CD8-positive, alpha-beta T cell (primary cell): ENCODE measurements at regions of chr2 and their contacts with region 1.

Region 1: GRCh38 chr2:192162392-192163042 is 32.2 kb downstream of the TMEFF2 start:
- DNase-seq: peak; percentile 23 to 74 (median 64)
- ATAC-seq: peak; percentile 49
- H3K4me3 ChIP-seq: no peak overlapping the region
- H3K4me3 Mint-ChIP-seq: peak overlapping the region; percentile 4
- H3K27ac ChIP-seq: no peak overlapping the region
- H3K27ac Mint-ChIP-seq: no peak overlapping the region
- H3K4me1 ChIP-seq: peaks cover 4% of the 10 kb centered on the region
- H3K4me1 Mint-ChIP-seq: peaks cover 9% of the 10 kb centered on the region
- H3K27me3 ChIP-seq: no peaks in the 10 kb centered on the region
- H3K27me3 Mint-ChIP-seq: peaks cover 11% of the 10 kb centered on the region
- CTCF ChIP-seq: peak; percentile 89

Region 2: DNA sequence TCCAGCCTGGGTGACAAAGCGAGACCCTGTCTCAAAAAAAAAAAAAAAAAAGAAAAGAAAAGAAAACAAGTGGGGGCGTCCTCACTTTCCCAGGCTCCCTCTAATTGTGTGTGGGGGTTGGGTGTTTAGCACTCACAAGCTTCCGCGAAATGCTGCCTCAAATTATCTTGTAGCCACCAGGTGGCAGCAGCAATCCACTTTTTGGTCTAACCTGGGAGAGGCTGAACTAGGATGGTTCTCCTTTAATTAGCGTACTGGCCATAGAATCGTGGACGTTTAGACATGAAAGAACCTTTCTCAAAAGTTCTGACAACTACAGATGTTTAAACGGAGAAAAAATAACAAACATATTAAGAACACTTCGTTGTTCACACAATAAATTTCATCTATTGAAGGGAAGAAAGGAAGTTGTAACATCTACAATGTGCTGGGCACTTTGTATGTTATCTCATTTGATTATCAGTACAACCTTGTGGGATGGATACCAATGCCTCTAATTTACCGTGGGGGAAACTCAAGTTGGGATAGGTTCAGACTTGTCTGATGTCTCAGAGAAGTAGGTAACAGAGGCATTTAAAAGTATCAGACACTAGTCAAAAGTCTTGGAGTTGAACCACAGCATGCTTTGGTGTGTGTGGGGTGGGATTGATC is 607.3 kb before region 1 on chr2:
- CTCF ChIA-PET with region 1: interaction called, 134 read pairs
- POLR2A ChIA-PET with region 1: interaction called, 3 read pairs
- intact Hi-C with region 1: loop called (anchors 1 kb)
- DNase-seq: peak; percentile 62 to 85 (median 80)
- ATAC-seq: peak; percentile 75
- H3K4me3 ChIP-seq: no peak overlapping the region
- H3K4me3 Mint-ChIP-seq: no peak overlapping the region
- H3K27ac ChIP-seq: no peak overlapping the region
- H3K27ac Mint-ChIP-seq: no peak overlapping the region
- H3K4me1 ChIP-seq: no peaks in the 10 kb centered on the region
- H3K4me1 Mint-ChIP-seq: peaks cover 4% of the 10 kb centered on the region
- H3K27me3 ChIP-seq: no peaks in the 10 kb centered on the region
- H3K27me3 Mint-ChIP-seq: peaks cover 15% of the 10 kb centered on the region
- CTCF ChIP-seq: peak; percentile 87

Region 3: GRCh38 chr2:191691016-191691735 is 471.3 kb before region 1 on chr2:
- CTCF ChIA-PET with region 1: interaction called, 9 read pairs
- POLR2A ChIA-PET with region 1: no interaction called
- intact Hi-C with region 1: loop called (anchors 2 to 5 kb)
- DNase-seq: peak in 7 of 9 experiments; percentile 9 to 85 (median 48)
- ATAC-seq: peak; percentile 93
- H3K4me3 ChIP-seq: no peak overlapping the region
- H3K4me3 Mint-ChIP-seq: no peak overlapping the region
- H3K27ac ChIP-seq: no peak overlapping the region
- H3K27ac Mint-ChIP-seq: peak overlapping the region; percentile 65
- H3K4me1 ChIP-seq: peaks cover 7% of the 10 kb centered on the region
- H3K4me1 Mint-ChIP-seq: peaks cover 10% of the 10 kb centered on the region
- H3K27me3 ChIP-seq: no peaks in the 10 kb centered on the region
- H3K27me3 Mint-ChIP-seq: no peaks in the 10 kb centered on the region
- CTCF ChIP-seq: peak; percentile 81

Region 4: DNA sequence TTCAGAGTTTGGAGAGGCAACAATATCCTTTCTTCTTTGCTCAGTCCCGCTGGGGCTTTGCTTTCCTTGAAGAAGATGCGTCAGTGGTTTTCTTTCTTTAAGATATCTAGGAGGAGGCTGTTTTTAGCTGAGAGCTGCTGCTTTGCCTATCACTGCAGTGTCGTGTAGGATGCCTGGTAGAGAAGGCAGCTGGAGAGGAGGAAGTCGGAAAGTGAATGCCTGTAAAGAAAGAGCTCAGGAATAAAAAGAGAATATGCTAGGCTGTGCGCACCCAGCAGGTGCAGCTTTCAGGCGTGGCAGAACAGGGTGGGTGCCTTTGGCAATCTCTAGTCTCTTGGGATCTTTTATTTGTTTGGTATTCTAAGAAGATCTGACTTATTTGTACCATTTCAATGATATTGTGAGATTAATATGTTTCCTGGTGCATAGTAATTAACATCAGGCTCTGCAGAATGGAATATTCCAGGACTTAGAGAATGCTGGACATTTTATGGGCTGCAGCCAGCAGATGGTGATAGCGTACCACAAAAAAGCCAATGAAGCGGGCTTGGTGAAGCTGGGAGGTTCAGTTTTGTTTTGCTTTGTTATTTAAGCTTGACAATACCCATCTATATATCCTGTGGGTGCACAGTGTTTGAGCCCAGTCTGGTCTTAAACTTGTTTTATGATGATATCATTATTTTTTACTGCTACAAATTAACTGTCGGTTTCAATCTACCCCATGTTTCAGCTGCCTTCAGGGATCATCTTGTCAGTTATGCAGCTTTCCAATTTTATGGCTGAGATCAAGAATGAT is 350.5 kb before region 1 on chr2:
- CTCF ChIA-PET with region 1: interaction called, 16 read pairs
- POLR2A ChIA-PET with region 1: no interaction called
- intact Hi-C with region 1: loop called (anchors 2 to 5 kb)
- DNase-seq: peak in 4 of 9 experiments; percentile 1 to 44 (median 28)
- ATAC-seq: peak; percentile 26
- H3K4me3 ChIP-seq: no peak overlapping the region
- H3K4me3 Mint-ChIP-seq: no peak overlapping the region
- H3K27ac ChIP-seq: no peak overlapping the region
- H3K27ac Mint-ChIP-seq: no peak overlapping the region
- H3K4me1 ChIP-seq: no peaks in the 10 kb centered on the region
- H3K4me1 Mint-ChIP-seq: no peaks in the 10 kb centered on the region
- H3K27me3 ChIP-seq: no peaks in the 10 kb centered on the region
- H3K27me3 Mint-ChIP-seq: peaks cover 6% of the 10 kb centered on the region
- CTCF ChIP-seq: peak; percentile 38